ENCODE measurements at regions of chr2 and their contacts with region 1.

Region 1: DNA sequence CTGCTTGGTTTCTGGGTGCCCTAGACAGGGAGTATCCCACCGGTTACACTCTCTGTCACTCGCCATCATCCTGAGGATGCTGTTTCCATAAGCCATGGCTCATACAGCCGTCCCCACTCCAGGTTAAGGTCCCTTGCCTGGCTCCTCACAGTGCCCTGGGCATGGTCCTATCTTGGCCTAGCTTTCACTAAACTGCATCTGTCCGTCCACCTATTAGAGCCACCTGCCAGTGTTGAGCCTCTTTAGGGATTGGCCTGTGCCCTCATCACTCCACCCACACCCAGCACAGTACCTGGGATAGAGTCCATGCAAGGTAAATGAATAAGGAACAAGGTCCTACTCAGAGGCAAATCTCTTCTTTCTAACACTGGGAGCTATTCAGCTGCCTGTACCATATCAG is 320.1 kb downstream of the GBX2 start:
- DNase-seq: no peak
- ATAC-seq: no peak

Region 2: GRCh38 chr2:235773188-235773928 is 74.7 kb before region 1 on chr2:
- intact Hi-C with region 1: no loop called
- DNase-seq: no peak
- ATAC-seq: no peak

Region 3: GRCh38 chr2:235808366-235808765 is 39.7 kb before region 1 on chr2:
- intact Hi-C with region 1: loop called (anchors 1 kb)
- DNase-seq: no peak
- ATAC-seq: no peak

Measured in Right ventricle myocardium inferior (tissue), 1 donor.